ENCODE measurements at regions of chr20 and their contacts with region 1.

Region 1: GRCh38 chr20:4108495-4109306 is 93.3 kb upstream of the RNF24 start:
- DNase-seq: peak; percentile 60
- H3K4me3 ChIP-seq: no peak overlapping the region
- H3K27ac ChIP-seq: no peak overlapping the region
- H3K4me1 ChIP-seq: peaks cover 9% of the 10 kb centered on the region
- H3K27me3 ChIP-seq: no peaks in the 10 kb centered on the region
- CTCF ChIP-seq: peak; percentile 99 to 100

Region 2: GRCh38 chr20:3101737-3102574 is 1006.7 kb before region 1 on chr20:
- CTCF ChIA-PET with region 1: no interaction called
- dilution Hi-C with region 1: no loop called
- in situ Hi-C with region 1: no loop called
- intact Hi-C with region 1: no loop called
- DNase-seq: no peak
- H3K4me3 ChIP-seq: no peak overlapping the region
- H3K27ac ChIP-seq: no peak overlapping the region
- H3K4me1 ChIP-seq: no peaks in the 10 kb centered on the region
- H3K27me3 ChIP-seq: no peaks in the 10 kb centered on the region
- CTCF ChIP-seq: no peak

Region 3: GRCh38 chr20:3864518-3864917 is 244.2 kb before region 1 on chr20:
- CTCF ChIA-PET with region 1: no interaction called
- dilution Hi-C with region 1: no loop called
- in situ Hi-C with region 1: no loop called
- intact Hi-C with region 1: no loop called
- DNase-seq: no peak
- H3K4me3 ChIP-seq: no peak overlapping the region
- H3K27ac ChIP-seq: no peak overlapping the region
- H3K4me1 ChIP-seq: peaks cover 22% of the 10 kb centered on the region
- H3K27me3 ChIP-seq: no peaks in the 10 kb centered on the region
- CTCF ChIP-seq: no peak

Region 4: GRCh38 chr20:4038047-4038459 is 70.6 kb before region 1 on chr20:
- CTCF ChIA-PET with region 1: no interaction called
- dilution Hi-C with region 1: no loop called
- in situ Hi-C with region 1: no loop called
- intact Hi-C with region 1: no loop called
- DNase-seq: peak; percentile 75
- H3K4me3 ChIP-seq: no peak overlapping the region
- H3K27ac ChIP-seq: peak overlapping the region; percentile 17
- H3K4me1 ChIP-seq: peaks cover 35% of the 10 kb centered on the region
- H3K27me3 ChIP-seq: no peaks in the 10 kb centered on the region
- CTCF ChIP-seq: no peak

Region 5: GRCh38 chr20:4174909-4175308 is 66.2 kb after region 1 on chr20:
- CTCF ChIA-PET with region 1: no interaction called
- dilution Hi-C with region 1: no loop called
- in situ Hi-C with region 1: loop called in 1 of 2 experiments (anchors 5 kb)
- intact Hi-C with region 1: no loop called
- DNase-seq: no peak
- H3K4me3 ChIP-seq: no peak overlapping the region
- H3K27ac ChIP-seq: no peak overlapping the region
- H3K4me1 ChIP-seq: peaks cover 21% of the 10 kb centered on the region
- H3K27me3 ChIP-seq: no peaks in the 10 kb centered on the region
- CTCF ChIP-seq: no peak

Region 6: GRCh38 chr20:4195499-4195898 is 86.8 kb after region 1 on chr20:
- CTCF ChIA-PET with region 1: no interaction called
- dilution Hi-C with region 1: no loop called
- in situ Hi-C with region 1: no loop called
- intact Hi-C with region 1: loop called (anchors 1 kb)
- DNase-seq: no peak
- H3K4me3 ChIP-seq: no peak overlapping the region
- H3K27ac ChIP-seq: no peak overlapping the region
- H3K4me1 ChIP-seq: peaks cover 30% of the 10 kb centered on the region
- H3K27me3 ChIP-seq: no peaks in the 10 kb centered on the region
- CTCF ChIP-seq: peak; percentile 46 to 73

Measured in mammary epithelial cell (primary cell).